ENCODE measurements at regions of chr11 and their contacts with region 1.

Region 1: GRCh38 chr11:9534791-9535781 is 38.4 kb upstream of the WEE1 start:
- DNase-seq: peak; percentile 74
- H3K4me3 ChIP-seq: no peak overlapping the region
- H3K27ac ChIP-seq: peak overlapping the region; percentile 44 to 68
- H3K4me1 ChIP-seq: peaks cover 8% of the 10 kb centered on the region
- H3K27me3 ChIP-seq: no peaks in the 10 kb centered on the region
- CTCF ChIP-seq: peak in 3 of 4 experiments; percentile 34 to 55 (median 55)
- POLR2A ChIP-seq: no peak

Region 2: GRCh38 chr11:9573052-9573774 is 38.1 kb after region 1 on chr11 and contains the start of gene WEE1:
- intact Hi-C with region 1: loop called (anchors 5 kb)
- DNase-seq: peak; percentile 98
- H3K4me3 ChIP-seq: peak within 1 kb of the TSS; percentile 77
- H3K27ac ChIP-seq: peak within 1 kb of the TSS; percentile 93 to 99
- H3K4me1 ChIP-seq: peaks cover 8% of the 10 kb centered on the region
- H3K27me3 ChIP-seq: no peaks in the 10 kb centered on the region
- CTCF ChIP-seq: no peak
- POLR2A ChIP-seq: peak; percentile 92
- total RNA-seq, gene WEE1: 31.0 to 33.1 TPM